Posterior vena cava (tissue), 2 donors: ENCODE measurements at regions of chr22 and their contacts with region 1.

Region 1: GRCh38 chr22:30375312-30375849 is 11.8 kb downstream of the RNF215 start:
- DNase-seq: no peak

Region 2: GRCh38 chr22:30277547-30278344 is 97.6 kb before region 1 on chr22:
- intact Hi-C with region 1: loop called in 1 of 2 experiments (anchors 5 kb)
- DNase-seq: no peak